ENCODE measurements at regions of chr14 and their contacts with region 1.

Region 1: DNA sequence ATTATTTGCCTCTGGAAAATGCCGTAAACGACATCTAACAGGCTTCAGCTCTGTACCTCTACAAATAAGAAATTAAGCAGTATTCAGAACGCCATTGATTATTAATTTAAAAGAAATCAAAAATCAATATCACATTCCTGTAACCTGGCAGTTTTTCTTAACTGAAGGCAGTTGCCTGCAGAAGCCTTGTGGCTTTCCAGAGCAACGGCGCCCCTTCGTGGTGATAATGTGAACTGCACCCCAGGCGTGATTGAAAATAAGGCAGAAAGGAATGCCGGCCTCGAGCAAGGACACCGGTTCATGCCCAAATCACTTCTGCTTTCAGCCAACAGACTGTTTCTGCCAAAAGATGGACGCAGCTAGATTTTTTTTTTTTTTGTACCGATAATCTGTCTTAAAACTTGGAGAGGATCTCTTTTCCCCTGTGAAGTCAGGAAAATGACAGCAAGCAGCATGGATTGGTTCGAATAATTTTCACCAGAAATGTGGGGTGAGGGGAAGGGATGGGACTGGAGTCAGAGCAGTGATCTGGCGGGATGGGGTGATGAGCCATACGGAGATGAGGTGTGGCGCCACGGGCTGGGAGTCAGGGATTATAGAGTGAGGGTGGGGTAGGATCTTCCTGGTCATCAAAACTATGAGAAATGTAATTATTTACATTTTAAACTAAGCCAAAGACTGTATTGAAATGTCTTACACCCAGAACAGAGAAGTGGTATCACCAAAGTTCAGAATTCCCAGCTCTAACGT is 473.0 kb downstream of the DPF3 start:
- DNase-seq: peak; percentile 67
- H3K4me3 ChIP-seq: no peak overlapping the region
- H3K27ac ChIP-seq: no peak overlapping the region
- H3K4me1 ChIP-seq: peaks cover 6% of the 10 kb centered on the region
- H3K27me3 ChIP-seq: no peaks in the 10 kb centered on the region
- CTCF ChIP-seq: peak; percentile 92

Region 2: GRCh38 chr14:71932220-71932981 is 488.5 kb before region 1 on chr14 and contains the start of gene RGS6:
- intact Hi-C with region 1: loop called (anchors 10 kb)
- DNase-seq: peak; percentile 34
- H3K4me3 ChIP-seq: peak within 1 kb of the TSS; percentile 77
- H3K27ac ChIP-seq: peak within 1 kb of the TSS; percentile 70
- H3K4me1 ChIP-seq: peaks cover 34% of the 10 kb centered on the region
- H3K27me3 ChIP-seq: peaks cover 31% of the 10 kb centered on the region
- CTCF ChIP-seq: peak; percentile 60
- total RNA-seq, gene RGS6: 23.0 TPM